Activated CD4-positive, alpha-beta T cell treated with anti-CD3 and anti-CD28 coated beads, Interleukin-2, amount 10 ng/mL, durations not matched to agents 24 days and 14 days (primary cell): ENCODE measurements at regions of chr3 and their contacts with region 1.

Region 1: DNA sequence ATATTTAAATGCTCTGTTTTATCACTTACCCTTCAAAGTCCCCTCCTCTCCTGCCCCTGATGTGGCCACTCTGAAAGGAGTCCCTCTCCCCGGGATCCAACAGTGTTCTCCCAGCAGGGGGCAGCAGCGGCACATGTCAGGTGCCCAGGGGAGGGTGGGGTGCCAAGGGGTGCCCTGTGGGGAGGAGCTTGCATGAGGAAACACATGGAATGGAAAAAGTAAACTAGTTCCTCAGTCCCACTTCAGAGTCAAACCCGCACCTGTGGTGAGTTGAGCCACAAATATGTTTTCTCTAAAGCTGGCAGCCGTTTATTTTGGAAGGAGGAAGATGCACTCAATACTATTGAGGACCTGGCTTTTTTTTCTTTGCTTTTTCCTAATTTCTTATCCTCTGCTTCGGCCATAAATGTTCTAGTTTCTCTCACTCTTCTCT is 30.1 kb upstream of the NRROS start:
- DNase-seq: peak; percentile 97
- H3K4me3 Mint-ChIP-seq: peak overlapping the region; percentile 62
- H3K27ac Mint-ChIP-seq: peak overlapping the region; percentile 66
- H3K4me1 Mint-ChIP-seq: peaks cover 35% of the 10 kb centered on the region
- H3K27me3 Mint-ChIP-seq: no peaks in the 10 kb centered on the region

Region 2: GRCh38 chr3:196537319-196537984 is 71.9 kb before region 1 on chr3:
- intact Hi-C with region 1: loop called (anchors 2 kb)
- DNase-seq: peak; percentile 89
- H3K4me3 Mint-ChIP-seq: no peak overlapping the region
- H3K27ac Mint-ChIP-seq: no peak overlapping the region
- H3K4me1 Mint-ChIP-seq: peaks cover 3% of the 10 kb centered on the region
- H3K27me3 Mint-ChIP-seq: peaks cover 8% of the 10 kb centered on the region

Region 3: DNA sequence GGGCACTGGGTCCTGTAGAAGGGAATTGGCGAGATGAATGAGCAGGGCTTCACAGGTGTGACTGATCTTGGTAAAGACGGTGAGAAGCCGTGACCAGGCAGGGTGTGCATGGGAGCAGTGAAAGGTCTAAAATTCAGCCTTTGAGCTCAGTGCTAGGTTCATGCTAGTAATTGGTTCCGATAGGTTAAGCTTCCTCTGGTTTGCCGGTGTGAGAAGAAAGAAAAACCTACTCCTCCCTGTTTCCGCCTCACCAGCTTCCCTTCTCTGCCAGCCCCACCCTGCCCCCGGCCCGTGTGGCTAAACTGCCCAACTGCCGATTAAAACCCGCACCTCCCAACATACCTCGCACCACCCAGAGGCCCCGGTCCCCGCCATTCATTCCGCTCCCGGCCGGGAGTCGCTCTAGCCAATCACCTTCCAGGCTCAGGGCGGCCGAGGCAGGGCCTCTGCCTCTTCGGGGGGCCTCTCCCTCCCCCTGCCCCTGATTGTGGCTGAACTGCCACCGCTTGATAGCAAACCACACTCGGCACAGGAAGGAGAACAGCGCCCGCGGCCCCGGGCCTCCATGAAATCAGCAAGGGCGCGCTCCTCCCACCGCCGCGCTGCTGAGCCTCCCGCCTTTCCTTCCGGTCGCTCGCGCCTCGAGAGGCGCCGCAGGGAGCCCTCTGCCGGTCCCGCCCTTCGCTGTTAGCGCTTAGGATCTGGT is 22.8 kb after region 1 on chr3:
- intact Hi-C with region 1: loop called (anchors 1 kb)
- DNase-seq: peak; percentile 97
- H3K4me3 Mint-ChIP-seq: peak overlapping the region; percentile 92
- H3K27ac Mint-ChIP-seq: peak overlapping the region; percentile 97
- H3K4me1 Mint-ChIP-seq: peaks cover 52% of the 10 kb centered on the region
- H3K27me3 Mint-ChIP-seq: no peaks in the 10 kb centered on the region

Region 4: DNA sequence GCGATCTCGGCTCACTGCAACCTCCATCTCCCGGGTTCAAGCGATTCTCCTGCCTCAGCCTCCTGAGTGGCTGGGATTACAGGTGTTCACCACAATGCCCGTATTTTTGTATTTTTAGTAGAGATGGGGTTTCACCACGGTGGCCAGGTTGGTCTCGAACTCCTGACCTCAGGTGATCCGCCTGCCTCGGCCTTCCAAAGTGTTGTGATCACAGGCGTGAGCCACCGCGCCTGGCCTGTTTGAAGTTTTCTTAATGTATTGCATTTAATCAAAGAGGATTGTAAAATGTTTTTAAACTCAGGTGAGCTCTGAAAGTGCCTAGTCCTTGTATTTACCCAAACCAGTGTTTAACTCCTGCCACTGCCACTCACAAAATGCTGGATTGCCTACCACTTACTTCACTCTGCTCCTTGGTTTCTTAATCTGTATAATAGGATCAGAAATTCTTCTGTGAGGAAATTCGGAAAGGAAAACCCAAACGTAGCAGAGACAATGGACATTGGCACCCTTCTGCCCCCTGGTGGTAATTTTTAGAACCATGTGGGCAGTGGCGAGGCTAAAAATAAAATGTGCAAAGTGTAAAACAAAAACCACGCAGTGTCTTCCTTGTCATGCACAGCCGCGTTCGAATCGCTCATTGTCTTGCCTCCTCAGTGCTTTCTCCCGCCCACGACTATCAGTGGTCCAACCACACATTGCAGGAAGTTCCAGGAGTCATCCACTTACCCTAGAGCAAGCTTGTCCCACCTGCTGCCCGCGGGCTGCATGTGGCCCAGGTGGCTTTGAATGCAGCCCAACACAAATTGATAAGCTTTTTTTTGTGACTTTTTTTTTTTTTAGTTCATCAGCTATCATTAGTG is 75.4 kb after region 1 on chr3:
- intact Hi-C with region 1: loop called (anchors 1 kb)
- DNase-seq: peak; percentile 91
- H3K4me3 Mint-ChIP-seq: peak overlapping the region; percentile 48
- H3K27ac Mint-ChIP-seq: peak overlapping the region; percentile 49
- H3K4me1 Mint-ChIP-seq: peaks cover 20% of the 10 kb centered on the region
- H3K27me3 Mint-ChIP-seq: no peaks in the 10 kb centered on the region

Region 5: GRCh38 chr3:196942226-196942914 is 333.0 kb after region 1 on chr3 and contains the start of gene NCBP2:
- intact Hi-C with region 1: loop called (anchors 1 kb)
- DNase-seq: peak; percentile 100
- H3K4me3 Mint-ChIP-seq: peak within 1 kb of the TSS; percentile 89
- H3K27ac Mint-ChIP-seq: peak within 1 kb of the TSS; percentile 95
- H3K4me1 Mint-ChIP-seq: peaks cover 41% of the 10 kb centered on the region
- H3K27me3 Mint-ChIP-seq: peaks cover 2% of the 10 kb centered on the region
- total RNA-seq, gene NCBP2: 101 and 105 TPM in 2 replicates

Region 6: GRCh38 chr3:196979545-196979944 is 370.2 kb after region 1 on chr3:
- intact Hi-C with region 1: no loop called
- DNase-seq: no peak
- H3K4me3 Mint-ChIP-seq: no peak overlapping the region
- H3K27ac Mint-ChIP-seq: no peak overlapping the region
- H3K4me1 Mint-ChIP-seq: peaks cover 2% of the 10 kb centered on the region
- H3K27me3 Mint-ChIP-seq: peaks cover 9% of the 10 kb centered on the region